ENCODE measurements at regions of chr1 and their contacts with region 1.

Region 1: DNA sequence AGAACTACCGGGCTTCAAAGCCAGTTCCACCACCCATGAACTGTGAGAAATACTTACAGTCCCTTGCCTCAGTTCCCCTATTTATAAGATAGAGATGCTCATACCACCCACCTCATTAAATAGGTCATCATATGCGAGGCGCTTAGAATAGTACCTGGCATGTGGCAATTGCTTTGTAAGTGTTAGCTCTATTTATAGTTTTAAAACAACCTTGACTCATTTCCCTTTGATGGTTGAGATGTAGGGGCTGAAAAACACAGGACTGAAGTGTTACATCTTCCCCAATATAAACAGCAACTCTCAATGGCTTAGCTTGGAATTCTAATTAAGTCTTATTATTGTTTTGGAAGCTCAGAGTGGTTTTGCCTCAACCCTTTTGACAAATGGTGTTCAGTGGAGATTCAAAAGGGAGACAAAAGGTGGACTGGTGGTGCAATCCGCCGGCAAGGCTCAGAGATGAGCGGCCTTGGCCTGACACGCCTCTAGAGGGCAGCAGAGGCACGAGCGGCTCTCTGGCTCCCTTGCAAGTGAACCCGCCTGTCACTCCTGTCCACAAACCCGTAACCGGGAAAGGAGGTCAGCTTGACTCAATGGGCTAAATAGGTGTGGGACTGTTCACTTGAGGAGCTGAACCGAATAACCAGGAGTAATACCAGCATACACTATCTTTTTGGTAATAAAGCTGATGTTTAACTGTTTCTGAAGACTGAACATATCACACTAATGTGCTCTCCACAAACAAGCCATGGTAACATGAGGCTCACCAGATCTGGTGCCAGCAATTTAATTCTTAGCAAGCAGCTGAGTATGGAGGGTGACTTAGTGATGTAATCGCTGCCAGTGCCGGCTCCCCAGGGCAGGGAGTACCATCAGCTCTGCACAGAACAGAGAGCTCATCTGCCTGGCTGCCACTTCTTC is 19.5 kb upstream of the SMYD2 start:
- DNase-seq: peak; percentile 78
- ATAC-seq: peak; percentile 90
- H3K4me3 ChIP-seq: no peak overlapping the region
- H3K4me3 Mint-ChIP-seq: no peak overlapping the region
- H3K27ac ChIP-seq: no peak overlapping the region
- H3K27ac Mint-ChIP-seq: no peak overlapping the region
- H3K4me1 ChIP-seq: peaks cover 3 to 4% of the 10 kb centered on the region in 2 donors
- H3K4me1 Mint-ChIP-seq: peaks cover 1% of the 10 kb centered on the region
- H3K27me3 ChIP-seq: peaks cover 0 to 43% (median 29%) of the 10 kb centered on the region in 4 experiments
- H3K27me3 Mint-ChIP-seq: peaks cover 64% of the 10 kb centered on the region
- CTCF ChIP-seq: peak; percentile 99

Region 2: DNA sequence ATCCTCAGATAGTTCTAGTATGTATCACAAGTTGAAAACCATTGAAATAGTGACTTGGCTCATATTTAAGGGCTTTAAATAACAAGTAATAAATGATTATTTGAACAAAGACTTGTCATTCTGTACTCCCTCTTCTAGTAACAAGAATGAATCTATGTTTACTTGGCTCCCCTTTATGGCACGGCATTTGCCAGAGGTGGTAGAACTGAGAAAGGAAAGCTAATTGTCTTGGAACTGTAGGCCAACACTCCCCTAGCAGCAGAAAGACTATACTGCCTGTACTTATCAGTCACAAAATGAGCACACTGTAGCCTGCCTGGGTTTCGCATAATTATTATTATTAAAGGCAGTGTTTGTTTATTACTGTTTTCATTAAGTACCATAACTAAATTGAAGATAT is 10.1 kb before region 1 on chr1:
- CTCF ChIA-PET with region 1: interaction called, 20 read pairs
- POLR2A ChIA-PET with region 1: no interaction called
- intact Hi-C with region 1: no loop called
- DNase-seq: no peak
- ATAC-seq: no peak
- H3K4me3 ChIP-seq: no peak overlapping the region
- H3K4me3 Mint-ChIP-seq: no peak overlapping the region
- H3K27ac ChIP-seq: no peak overlapping the region
- H3K27ac Mint-ChIP-seq: no peak overlapping the region
- H3K4me1 ChIP-seq: no peaks in the 10 kb centered on the region
- H3K4me1 Mint-ChIP-seq: no peaks in the 10 kb centered on the region
- H3K27me3 ChIP-seq: peaks cover 0 to 6% (median 2%) of the 10 kb centered on the region in 4 experiments
- H3K27me3 Mint-ChIP-seq: peaks cover 38% of the 10 kb centered on the region
- CTCF ChIP-seq: no peak

Region 3: GRCh38 chr1:214303141-214303930 is 41.9 kb after region 1 on chr1:
- CTCF ChIA-PET with region 1: interaction called, 17 read pairs
- POLR2A ChIA-PET with region 1: no interaction called
- intact Hi-C with region 1: no loop called
- DNase-seq: no peak
- ATAC-seq: no peak
- H3K4me3 ChIP-seq: no peak overlapping the region
- H3K4me3 Mint-ChIP-seq: no peak overlapping the region
- H3K27ac ChIP-seq: no peak overlapping the region
- H3K27ac Mint-ChIP-seq: no peak overlapping the region
- H3K4me1 ChIP-seq: peaks cover 0 to 3% of the 10 kb centered on the region in 2 donors
- H3K4me1 Mint-ChIP-seq: peaks cover 13% of the 10 kb centered on the region
- H3K27me3 ChIP-seq: no peaks in the 10 kb centered on the region
- H3K27me3 Mint-ChIP-seq: no peaks in the 10 kb centered on the region
- CTCF ChIP-seq: no peak

Region 4: GRCh38 chr1:214316593-214316992 is 55.1 kb after region 1 on chr1:
- CTCF ChIA-PET with region 1: interaction called, 27 read pairs
- POLR2A ChIA-PET with region 1: no interaction called
- intact Hi-C with region 1: no loop called
- DNase-seq: no peak
- ATAC-seq: no peak
- H3K4me3 ChIP-seq: no peak overlapping the region
- H3K4me3 Mint-ChIP-seq: no peak overlapping the region
- H3K27ac ChIP-seq: no peak overlapping the region
- H3K27ac Mint-ChIP-seq: no peak overlapping the region
- H3K4me1 ChIP-seq: no peaks in the 10 kb centered on the region
- H3K4me1 Mint-ChIP-seq: peaks cover 3% of the 10 kb centered on the region
- H3K27me3 ChIP-seq: no peaks in the 10 kb centered on the region
- H3K27me3 Mint-ChIP-seq: no peaks in the 10 kb centered on the region
- CTCF ChIP-seq: no peak

Region 5: DNA sequence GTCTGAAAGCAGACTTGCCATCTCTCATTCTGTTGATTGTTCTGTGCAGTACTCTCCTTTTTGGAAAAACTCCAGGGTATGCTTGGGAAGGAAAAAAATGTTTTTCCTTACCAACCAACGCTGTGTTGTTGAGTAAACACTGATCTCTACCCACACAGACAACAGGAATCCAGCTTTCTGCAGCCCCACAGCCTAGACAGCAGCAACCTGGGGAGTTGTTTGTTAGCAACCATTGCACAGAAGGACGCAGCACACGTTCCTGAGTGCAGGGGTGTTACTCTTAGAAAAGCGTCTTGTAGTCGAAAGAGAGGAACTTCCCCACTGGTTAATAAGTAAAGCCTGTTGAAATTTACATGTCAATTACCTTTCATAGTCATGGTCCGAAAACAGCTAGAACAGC is 76.0 kb after region 1 on chr1:
- CTCF ChIA-PET with region 1: interaction called, 643 read pairs
- POLR2A ChIA-PET with region 1: no interaction called
- intact Hi-C with region 1: no loop called
- DNase-seq: no peak
- ATAC-seq: no peak
- H3K4me3 ChIP-seq: no peak overlapping the region
- H3K4me3 Mint-ChIP-seq: no peak overlapping the region
- H3K27ac ChIP-seq: no peak overlapping the region
- H3K27ac Mint-ChIP-seq: no peak overlapping the region
- H3K4me1 ChIP-seq: no peaks in the 10 kb centered on the region
- H3K4me1 Mint-ChIP-seq: no peaks in the 10 kb centered on the region
- H3K27me3 ChIP-seq: no peaks in the 10 kb centered on the region
- H3K27me3 Mint-ChIP-seq: no peaks in the 10 kb centered on the region
- CTCF ChIP-seq: no peak

Region 6: GRCh38 chr1:214637722-214638458 is 376.4 kb after region 1 on chr1:
- CTCF ChIA-PET with region 1: interaction called, 6 read pairs
- POLR2A ChIA-PET with region 1: no interaction called
- intact Hi-C with region 1: loop called (anchors 2 kb)
- DNase-seq: peak; percentile 36
- ATAC-seq: no peak
- H3K4me3 ChIP-seq: no peak overlapping the region
- H3K4me3 Mint-ChIP-seq: no peak overlapping the region
- H3K27ac ChIP-seq: no peak overlapping the region
- H3K27ac Mint-ChIP-seq: no peak overlapping the region
- H3K4me1 ChIP-seq: no peaks in the 10 kb centered on the region
- H3K4me1 Mint-ChIP-seq: no peaks in the 10 kb centered on the region
- H3K27me3 ChIP-seq: no peaks in the 10 kb centered on the region
- H3K27me3 Mint-ChIP-seq: no peaks in the 10 kb centered on the region
- CTCF ChIP-seq: peak; percentile 73